ENCODE measurements at regions of chr1 and their contacts with region 1.

Region 1: DNA sequence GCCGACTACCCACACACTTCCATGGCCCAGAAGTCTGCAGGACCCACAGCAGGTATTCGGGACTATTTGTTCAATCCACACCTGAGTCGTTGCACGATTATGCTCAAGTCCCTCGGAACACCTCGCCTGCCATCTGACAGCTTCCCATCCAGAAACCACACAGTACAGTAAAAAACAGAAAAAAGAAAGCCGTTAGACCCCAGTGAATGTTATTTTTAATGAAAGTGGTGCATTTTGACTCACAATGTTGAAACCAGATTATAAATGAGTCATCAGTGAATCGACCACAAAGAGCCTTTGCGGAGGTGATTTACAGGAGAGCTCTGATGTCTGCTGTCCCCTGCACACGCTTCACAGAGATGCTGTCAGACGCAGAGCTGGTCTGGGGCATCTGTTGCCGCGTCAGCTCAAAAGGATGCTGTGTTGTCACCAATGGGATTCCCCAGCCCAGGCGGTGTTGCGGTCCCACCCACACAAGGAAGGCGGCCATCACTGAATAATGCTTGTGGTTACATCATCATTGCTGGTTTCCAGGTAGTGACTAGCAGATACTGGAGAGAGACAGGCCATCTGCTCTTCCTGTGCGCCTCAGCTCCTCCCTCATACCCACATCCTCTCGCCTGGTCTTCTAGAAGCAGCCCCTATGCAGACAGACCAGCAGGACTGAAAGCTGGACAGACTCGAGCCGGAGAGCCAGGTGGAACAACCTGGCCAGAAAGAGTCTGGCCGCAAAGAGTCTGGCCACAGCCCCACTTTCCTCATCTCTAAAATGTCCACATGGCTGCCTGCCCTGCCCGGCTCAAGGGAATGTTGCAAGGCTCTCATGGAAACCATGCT is 116.8 kb downstream of the TOMM20 start:
- DNase-seq: peak; percentile 64
- H3K4me3 ChIP-seq: no peak overlapping the region
- H3K27ac ChIP-seq: peak overlapping the region; percentile 82
- H3K4me1 ChIP-seq: peaks cover 29% of the 10 kb centered on the region
- H3K27me3 ChIP-seq: no peaks in the 10 kb centered on the region
- CTCF ChIP-seq: no peak
- POLR2A ChIP-seq: no peak

Region 2: GRCh38 chr1:234970731-234971476 is 40.9 kb before region 1 on chr1:
- CTCF ChIA-PET with region 1: no interaction called
- POLR2A ChIA-PET with region 1: no interaction called
- dilution Hi-C with region 1: no loop called
- intact Hi-C with region 1: no loop called
- DNase-seq: peak; percentile 55
- H3K4me3 ChIP-seq: no peak overlapping the region
- H3K27ac ChIP-seq: no peak overlapping the region
- H3K4me1 ChIP-seq: peaks cover 29% of the 10 kb centered on the region
- H3K27me3 ChIP-seq: no peaks in the 10 kb centered on the region
- CTCF ChIP-seq: no peak
- POLR2A ChIP-seq: no peak

Region 3: GRCh38 chr1:235050911-235051360 is 39.1 kb after region 1 on chr1:
- CTCF ChIA-PET with region 1: no interaction called
- POLR2A ChIA-PET with region 1: no interaction called
- dilution Hi-C with region 1: no loop called
- intact Hi-C with region 1: loop called (anchors 2 kb)
- DNase-seq: peak; percentile 18
- H3K4me3 ChIP-seq: no peak overlapping the region
- H3K27ac ChIP-seq: no peak overlapping the region
- H3K4me1 ChIP-seq: peaks cover 14% of the 10 kb centered on the region
- H3K27me3 ChIP-seq: no peaks in the 10 kb centered on the region
- CTCF ChIP-seq: no peak
- POLR2A ChIP-seq: no peak

Measured in endothelial cell of umbilical vein (primary cell).